ENCODE measurements at regions of chr20 and their contacts with region 1.

Region 1: DNA sequence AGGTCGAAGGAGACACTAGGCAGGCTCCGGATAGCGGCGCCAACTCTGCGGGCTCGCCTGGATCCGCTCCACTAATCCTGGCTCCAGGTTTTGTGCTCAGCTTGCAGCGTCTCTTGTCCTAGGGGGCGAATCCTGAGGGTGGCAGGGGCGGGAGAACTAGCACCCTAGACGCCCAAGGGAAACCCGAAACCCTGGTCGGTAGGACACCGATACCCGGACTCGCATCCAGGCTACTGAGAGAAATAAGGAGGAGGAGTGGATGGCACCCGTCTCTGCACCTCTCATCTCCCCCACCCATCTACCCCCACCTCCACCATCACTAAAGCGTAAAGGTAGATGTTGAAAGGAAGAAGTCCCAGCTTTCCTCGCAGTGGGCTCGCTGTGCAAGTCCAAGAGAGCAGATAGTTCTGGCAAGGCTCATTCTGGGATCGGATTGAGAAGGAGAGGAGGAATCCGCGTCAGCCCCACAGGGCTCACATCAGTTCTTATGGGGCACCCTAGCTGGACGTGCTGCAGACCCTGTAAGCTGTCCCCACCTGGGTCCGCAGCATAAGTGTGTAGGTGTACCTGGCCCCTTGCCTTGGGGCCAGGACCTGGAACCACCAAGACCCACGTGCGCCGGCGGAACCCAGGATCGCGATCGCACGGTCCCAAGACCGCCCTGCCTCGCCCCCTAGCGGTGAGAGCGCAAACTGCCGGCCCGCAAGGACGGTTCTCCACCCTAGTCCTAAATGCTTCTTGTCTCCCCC is 6.9 kb downstream of the SLC32A1 start:
- DNase-seq: peak; percentile 53
- H3K4me3 ChIP-seq: peak overlapping the region; percentile 14 to 32 (median 28)
- H3K27ac ChIP-seq: no peak overlapping the region
- H3K4me1 ChIP-seq: peaks cover 3% of the 10 kb centered on the region
- H3K27me3 ChIP-seq: peaks cover 46% of the 10 kb centered on the region
- CTCF ChIP-seq: peak; percentile 96 to 97

Region 2: DNA sequence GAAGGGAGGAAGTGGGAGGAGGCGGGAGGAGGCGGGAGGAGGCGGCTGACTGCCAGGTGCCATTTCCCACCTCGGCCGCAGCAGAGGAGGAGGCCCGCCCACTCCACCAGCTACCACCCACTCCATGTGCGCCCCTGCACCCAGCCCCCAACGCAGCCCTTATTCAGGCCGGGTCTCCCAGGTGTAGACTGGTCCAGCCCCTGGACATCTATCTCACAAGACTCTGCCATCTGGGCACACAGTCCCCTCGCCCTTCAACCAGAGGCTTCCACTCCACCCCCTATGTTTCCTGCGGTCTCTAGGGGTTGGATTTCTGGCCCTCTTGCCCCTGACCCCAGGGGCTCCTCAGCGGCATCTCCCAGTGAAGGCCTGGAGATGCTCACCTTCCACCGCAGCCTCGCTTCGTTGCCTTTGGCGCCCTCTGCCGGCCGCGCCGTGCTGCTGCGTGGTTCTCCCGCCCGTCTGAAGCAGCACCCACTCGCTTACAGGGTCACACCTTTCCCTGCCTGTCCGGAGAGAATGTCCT is 162.5 kb after region 1 on chr20:
- CTCF ChIA-PET with region 1: no interaction called
- dilution Hi-C with region 1: no loop called
- in situ Hi-C with region 1: no loop called
- intact Hi-C with region 1: loop called (anchors 1 kb)
- DNase-seq: peak; percentile 18
- H3K4me3 ChIP-seq: no peak overlapping the region
- H3K27ac ChIP-seq: no peak overlapping the region
- H3K4me1 ChIP-seq: peaks cover 4% of the 10 kb centered on the region
- H3K27me3 ChIP-seq: no peaks in the 10 kb centered on the region
- CTCF ChIP-seq: peak; percentile 87 to 94